Activated naive CD4-positive, alpha-beta T cell treated with anti-CD3 and anti-CD28 coated beads, Interleukin-2, amount 10 ng/mL, durations not matched to agents 7 days and 5 days (primary cell): ENCODE measurements at regions of chr5 and their contacts with region 1.

Region 1: DNA sequence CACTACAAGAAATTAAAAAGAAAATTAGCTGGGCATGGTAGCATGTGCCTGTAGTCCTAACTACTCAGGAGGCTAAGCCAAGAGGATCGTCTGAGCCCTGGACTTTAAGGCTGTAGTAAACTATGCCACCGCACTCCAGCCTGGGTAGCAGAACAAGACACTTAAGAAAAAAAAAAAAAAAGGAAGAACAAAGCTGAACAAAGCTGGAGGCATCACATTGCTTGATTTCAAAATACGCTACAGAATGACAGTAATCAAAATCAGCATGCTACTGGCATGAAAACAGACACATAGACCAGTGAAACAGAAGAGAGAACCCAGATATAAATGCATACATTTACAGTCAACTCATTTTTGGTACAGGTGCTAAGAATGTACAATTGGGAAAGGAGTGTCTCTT is 14.5 kb upstream of the OTULIN start:
- DNase-seq: no peak
- H3K4me3 Mint-ChIP-seq: no peak overlapping the region
- H3K27ac Mint-ChIP-seq: no peak overlapping the region
- H3K4me1 Mint-ChIP-seq: peaks cover 11% of the 10 kb centered on the region
- H3K27me3 Mint-ChIP-seq: peaks cover 37% of the 10 kb centered on the region

Region 2: GRCh38 chr5:14351845-14352712 is 298.0 kb before region 1 on chr5:
- CTCF ChIA-PET with region 1: interaction called, 240 read pairs
- DNase-seq: peak; percentile 74
- H3K4me3 Mint-ChIP-seq: no peak overlapping the region
- H3K27ac Mint-ChIP-seq: no peak overlapping the region
- H3K4me1 Mint-ChIP-seq: peaks cover 6% of the 10 kb centered on the region
- H3K27me3 Mint-ChIP-seq: peaks cover 19% of the 10 kb centered on the region

Region 3: DNA sequence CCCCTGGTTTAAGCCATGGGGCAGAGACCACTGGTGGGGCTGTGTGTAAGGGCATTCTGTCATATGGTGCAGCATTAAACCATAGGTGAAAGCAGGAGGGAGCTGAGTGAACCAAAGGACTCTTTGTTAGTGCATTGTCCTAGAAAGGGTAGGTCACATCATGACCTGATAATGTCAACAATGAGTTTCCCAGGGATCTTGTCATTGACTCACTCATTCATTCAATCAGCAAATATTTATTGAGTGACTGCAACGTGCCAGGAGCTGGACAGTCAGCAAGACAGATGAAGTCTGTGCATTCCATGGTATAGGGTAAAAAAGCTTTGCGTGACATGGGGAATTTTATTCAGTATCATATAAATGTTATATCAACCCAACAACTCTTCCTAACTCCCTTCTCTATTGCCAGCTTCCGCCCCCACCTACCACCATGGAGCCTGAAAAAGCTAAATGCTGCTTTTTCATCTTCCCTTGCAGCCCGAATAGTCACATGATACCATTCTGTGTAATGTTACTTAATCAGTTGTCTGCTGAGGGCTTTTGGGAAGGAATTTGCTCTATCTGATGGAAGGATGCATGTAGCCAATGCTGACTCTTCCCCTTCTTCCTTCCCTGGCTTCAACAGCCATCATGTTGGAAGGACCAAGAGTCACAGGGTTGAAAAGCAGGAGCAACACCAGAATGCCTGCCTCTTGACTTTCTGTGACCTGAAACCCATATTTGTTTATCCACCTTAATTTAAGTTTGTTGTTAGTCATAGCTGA is 79.9 kb before region 1 on chr5:
- CTCF ChIA-PET with region 1: no interaction called
- DNase-seq: no peak
- H3K4me3 Mint-ChIP-seq: no peak overlapping the region
- H3K27ac Mint-ChIP-seq: no peak overlapping the region
- H3K4me1 Mint-ChIP-seq: no peaks in the 10 kb centered on the region
- H3K27me3 Mint-ChIP-seq: peaks cover 15% of the 10 kb centered on the region